ENCODE measurements at regions of chr12 and their contacts with region 1.

Region 1: GRCh38 chr12:49866859-49867579 is 24.1 kb upstream of the BCDIN3D start:
- DNase-seq: peak; percentile 52 to 81
- ATAC-seq: peak; percentile 78

Region 2: DNA sequence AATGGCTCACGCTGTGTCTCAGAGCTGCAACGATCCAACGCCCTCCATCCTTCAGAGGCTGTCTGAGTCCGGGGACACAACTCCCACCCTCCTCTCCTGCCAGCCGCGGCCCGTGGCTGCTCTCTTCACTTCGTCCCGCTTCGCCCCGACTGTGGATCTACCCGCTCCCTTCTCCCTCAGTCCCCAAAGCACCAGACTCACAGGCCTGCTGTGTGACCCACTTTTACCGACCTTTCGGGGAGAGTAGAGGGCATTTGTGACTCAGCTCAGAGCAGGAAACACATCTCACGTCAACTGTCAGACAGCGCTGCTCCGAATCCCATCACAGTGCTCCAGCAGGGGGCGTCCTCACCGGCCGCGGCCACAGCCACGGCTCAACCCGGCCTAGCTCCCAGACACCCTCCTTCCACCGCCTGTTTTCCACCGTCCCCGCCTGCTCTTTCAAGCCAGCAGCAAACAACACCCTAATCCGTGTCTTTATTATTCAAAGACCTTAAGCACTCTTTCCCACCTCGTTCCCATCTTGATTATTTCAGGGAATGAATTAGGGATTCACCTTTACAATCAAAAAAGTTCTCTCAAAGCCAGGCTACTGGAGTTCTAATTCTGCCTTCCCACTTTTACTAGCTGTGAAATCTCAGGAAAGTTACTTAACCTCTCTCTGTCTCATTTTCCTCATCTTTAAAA is 78.5 kb after region 1 on chr12:
- intact Hi-C with region 1: loop called in 1 of 2 experiments (anchors 5 kb)
- DNase-seq: peak; percentile 78 to 88
- ATAC-seq: peak; percentile 79

Region 3: DNA sequence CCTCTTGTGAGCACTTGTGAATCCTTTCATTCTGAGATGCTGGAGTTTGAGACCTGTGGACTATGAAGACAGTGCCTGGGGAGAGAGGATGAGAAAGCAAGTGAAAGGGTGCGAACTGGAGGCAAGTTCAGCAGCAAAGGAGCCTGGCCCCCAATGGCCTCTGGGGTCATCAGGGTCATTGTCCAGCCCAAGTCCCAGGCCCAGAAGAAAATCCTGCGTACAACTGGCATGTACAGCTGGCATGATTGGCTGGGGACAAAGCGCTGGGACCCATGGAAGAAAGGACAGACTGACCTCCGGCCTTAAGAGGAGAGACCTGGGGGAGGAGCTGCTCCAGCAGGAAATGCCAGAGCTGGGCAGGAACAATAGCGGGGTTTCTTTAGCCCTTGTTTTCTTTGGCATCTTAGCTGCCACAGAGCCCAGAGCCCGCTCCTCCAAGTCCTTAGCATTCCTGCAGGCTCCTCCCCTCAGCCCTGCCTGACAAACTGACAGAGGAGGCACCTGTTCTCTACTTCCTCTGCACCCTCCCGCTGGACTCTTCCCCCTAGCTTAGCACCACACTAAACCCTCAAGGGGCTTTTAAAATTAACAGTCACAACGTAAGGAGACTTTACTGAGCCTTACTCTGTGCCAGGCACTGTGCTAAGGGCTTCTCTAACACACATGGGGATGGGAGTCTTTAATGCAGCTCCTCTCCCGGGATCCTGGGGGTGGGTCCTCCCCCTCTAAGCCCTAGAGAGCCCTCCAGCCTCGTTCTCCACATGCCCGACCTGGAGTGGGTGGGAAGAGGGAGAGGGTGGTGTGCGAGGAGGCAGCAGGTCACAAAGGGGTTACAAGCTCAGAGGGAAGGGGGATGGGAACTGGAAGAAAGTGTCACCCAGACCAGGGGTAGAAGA is 92.8 kb after region 1 on chr12:
- intact Hi-C with region 1: no loop called
- DNase-seq: no peak
- ATAC-seq: peak; percentile 55